K562 (cell line): ENCODE measurements at regions of chr6 and their contacts with region 1.

Region 1: DNA sequence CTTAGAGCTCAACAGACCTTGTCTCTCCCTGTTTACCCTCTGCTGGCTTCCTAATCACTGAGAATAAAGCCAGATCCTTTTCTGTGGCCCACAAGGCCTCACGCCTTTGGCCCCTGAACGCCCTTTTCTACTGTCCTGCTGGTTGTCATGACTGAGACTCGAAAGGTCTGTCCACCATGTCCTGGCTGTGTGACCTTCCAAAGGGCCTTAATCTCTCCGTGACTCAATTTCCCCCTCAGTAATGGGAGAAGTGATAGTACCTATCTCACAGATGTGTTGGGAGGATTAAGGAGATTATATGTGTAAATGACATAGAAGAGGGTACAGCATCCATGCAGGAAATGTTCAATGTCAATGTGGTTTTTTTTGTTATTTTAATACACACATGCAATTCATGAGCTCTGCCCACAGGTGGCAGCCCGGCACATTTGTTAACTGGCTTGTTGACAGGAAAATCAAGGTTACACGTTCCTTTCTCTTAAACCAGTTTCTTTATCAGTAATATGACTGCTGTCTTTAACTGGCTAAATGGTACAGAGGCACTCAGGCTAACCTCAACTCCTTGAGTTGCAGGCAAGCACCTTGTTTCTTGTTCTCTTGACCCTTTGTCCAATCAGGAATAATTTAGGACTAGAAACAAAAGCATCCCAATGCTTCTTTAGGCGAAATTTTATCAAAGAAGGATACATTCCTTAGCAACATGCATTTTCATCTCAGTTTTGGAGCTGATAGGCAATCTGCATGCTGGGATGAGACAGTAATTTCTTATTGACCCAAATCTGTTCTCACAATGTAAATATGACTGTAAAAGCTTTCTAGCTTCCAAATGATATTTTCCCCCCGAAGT is 16.6 kb downstream of the SLC22A1 start:
- DNase-seq: peak; percentile 60 to 73 (median 64)
- ATAC-seq: peak; percentile 69
- H3K4me3 ChIP-seq: no peak overlapping the region
- H3K27ac ChIP-seq: no peak overlapping the region
- H3K4me1 ChIP-seq: peaks cover 0 to 7% of the 10 kb centered on the region in 2 experiments; a peak in 1 of 5 replicates
- H3K27me3 ChIP-seq: peaks cover 27 to 57% of the 10 kb centered on the region in 2 experiments
- CTCF ChIP-seq: peak; percentile 74 to 94 (median 85)
- EP300 ChIP-seq: no peak
- POLR2A ChIP-seq: no peak
- RAD21 ChIP-seq: peak; percentile 89 to 93

Region 2: GRCh38 chr6:160160450-160160849 is 22.2 kb after region 1 on chr6:
- CTCF ChIA-PET with region 1: no interaction called
- POLR2A ChIA-PET with region 1: interaction called, 5 read pairs
- in situ Hi-C with region 1: no loop called
- intact Hi-C with region 1: loop called (anchors 1 kb)
- DNase-seq: peak; percentile 37 to 46 (median 42)
- ATAC-seq: peak; percentile 91
- H3K4me3 ChIP-seq: no peak overlapping the region
- H3K27ac ChIP-seq: no peak overlapping the region
- H3K4me1 ChIP-seq: peaks cover 0 to 4% of the 10 kb centered on the region in 2 experiments; a peak in 2 of 5 replicates
- H3K27me3 ChIP-seq: peaks cover 9 to 28% of the 10 kb centered on the region in 2 experiments; a peak in 4 of 5 replicates
- CTCF ChIP-seq: peak; percentile 39 to 68 (median 61); a peak in 5 of 6 replicates
- EP300 ChIP-seq: no peak
- POLR2A ChIP-seq: no peak
- RAD21 ChIP-seq: peak; percentile 41 to 54

Region 3: GRCh38 chr6:160178271-160178670 is 40.1 kb after region 1 on chr6:
- CTCF ChIA-PET with region 1: no interaction called
- POLR2A ChIA-PET with region 1: no interaction called
- in situ Hi-C with region 1: no loop called
- intact Hi-C with region 1: no loop called
- DNase-seq: no peak
- ATAC-seq: no peak
- H3K4me3 ChIP-seq: no peak overlapping the region
- H3K27ac ChIP-seq: no peak overlapping the region
- H3K4me1 ChIP-seq: no peaks in the 10 kb centered on the region
- H3K27me3 ChIP-seq: peaks cover 0 to 3% of the 10 kb centered on the region in 2 experiments; a peak in 1 of 5 replicates
- CTCF ChIP-seq: no peak
- EP300 ChIP-seq: no peak
- POLR2A ChIP-seq: no peak
- RAD21 ChIP-seq: no peak

Region 4: GRCh38 chr6:160261991-160262680 is 123.9 kb after region 1 on chr6:
- CTCF ChIA-PET with region 1: no interaction called
- POLR2A ChIA-PET with region 1: no interaction called
- in situ Hi-C with region 1: no loop called
- intact Hi-C with region 1: loop called (anchors 5 kb)
- DNase-seq: peak; percentile 46 to 70 (median 56)
- ATAC-seq: peak; percentile 96
- H3K4me3 ChIP-seq: no peak overlapping the region
- H3K27ac ChIP-seq: no peak overlapping the region
- H3K4me1 ChIP-seq: peaks cover 0 to 6% of the 10 kb centered on the region in 2 experiments; a peak in 2 of 5 replicates
- H3K27me3 ChIP-seq: peaks cover 23 to 41% of the 10 kb centered on the region in 2 experiments
- CTCF ChIP-seq: peak; percentile 48 to 53 (median 53); a peak in 5 of 6 replicates
- EP300 ChIP-seq: no peak
- POLR2A ChIP-seq: no peak
- RAD21 ChIP-seq: peak; percentile 24 to 28; a peak in 1 of 4 replicates

Region 5: DNA sequence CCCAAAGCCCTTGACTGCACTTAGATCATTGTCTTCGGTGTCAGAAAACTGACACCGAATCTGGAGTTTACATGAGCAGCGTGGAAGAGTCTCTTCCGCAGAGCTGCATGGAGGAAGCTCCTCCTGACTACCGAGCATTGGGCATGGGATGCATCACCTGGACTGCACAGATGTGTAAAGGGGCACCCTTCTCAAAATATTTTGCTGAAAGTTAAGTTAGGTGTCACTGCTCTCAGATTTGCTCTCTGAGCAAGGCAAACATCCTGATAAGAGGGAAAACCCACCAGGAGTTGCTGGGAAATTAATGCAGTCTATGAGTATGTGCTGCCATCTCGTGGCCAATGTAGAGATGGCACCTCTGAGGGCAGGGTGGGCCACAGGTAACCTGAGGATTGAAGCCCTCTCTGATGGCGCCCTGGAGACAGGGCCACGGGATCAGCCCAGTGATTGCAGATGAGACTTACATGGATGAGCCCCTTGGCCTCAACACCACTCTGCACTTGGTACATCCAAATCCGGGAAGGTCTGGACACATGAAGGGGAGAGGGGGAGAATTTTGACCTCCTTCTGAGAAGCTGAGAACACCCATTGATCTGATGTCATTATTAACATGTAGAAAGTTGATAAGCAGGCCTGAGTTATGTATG is 396.0 kb after region 1 on chr6:
- CTCF ChIA-PET with region 1: interaction called, 3 read pairs
- POLR2A ChIA-PET with region 1: no interaction called
- in situ Hi-C with region 1: no loop called
- intact Hi-C with region 1: loop called (anchors 1 kb)
- DNase-seq: peak; percentile 68 to 76 (median 70)
- ATAC-seq: peak; percentile 93
- H3K4me3 ChIP-seq: no peak overlapping the region
- H3K27ac ChIP-seq: no peak overlapping the region
- H3K4me1 ChIP-seq: no peaks in the 10 kb centered on the region
- H3K27me3 ChIP-seq: peaks cover 2 to 10% of the 10 kb centered on the region in 2 experiments; a peak in 3 of 5 replicates
- CTCF ChIP-seq: peak; percentile 79 to 94 (median 83)
- EP300 ChIP-seq: no peak
- POLR2A ChIP-seq: no peak
- RAD21 ChIP-seq: peak; percentile 89 to 94